Caco-2 (cell line): ENCODE measurements at regions of chr2 and their contacts with region 1.

Region 1: DNA sequence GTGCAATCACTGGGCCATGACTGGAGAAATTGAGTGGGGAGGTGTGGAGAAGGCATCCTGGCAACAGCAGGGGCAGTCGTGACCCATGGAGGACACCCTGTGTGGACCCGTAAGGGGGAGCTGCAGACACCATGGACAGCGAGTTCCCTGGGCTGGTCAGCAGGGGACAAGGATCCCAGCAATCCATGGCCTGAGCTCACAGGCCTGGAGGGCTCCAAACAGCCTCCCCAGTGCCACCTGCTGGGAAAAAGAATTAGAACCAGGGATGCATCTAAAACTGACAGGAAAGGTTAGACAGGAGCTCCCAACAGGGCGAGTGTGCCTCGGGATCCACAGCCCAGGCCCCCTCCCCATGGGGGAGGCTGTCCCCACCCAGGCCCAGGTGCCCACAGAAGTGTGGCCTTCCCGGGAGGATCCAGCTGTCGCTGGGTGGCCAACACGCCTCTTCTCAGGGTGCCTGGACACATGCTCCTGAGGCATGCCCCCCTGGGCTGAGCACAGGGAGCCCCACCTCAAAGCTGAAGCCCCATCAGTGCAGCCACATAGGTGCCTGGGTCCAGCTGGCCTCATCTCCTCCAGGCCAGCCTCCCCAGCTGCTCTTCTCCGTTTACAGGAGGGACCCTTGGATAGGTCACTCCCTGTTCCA is 20.5 kb upstream of the KIF1A start:
- DNase-seq: peak; percentile 78 to 81
- H3K4me3 ChIP-seq: no peak overlapping the region
- H3K4me3 Mint-ChIP-seq: no peak overlapping the region
- H3K27ac Mint-ChIP-seq: no peak overlapping the region
- H3K4me1 ChIP-seq: no peaks in the 10 kb centered on the region
- H3K4me1 Mint-ChIP-seq: no peaks in the 10 kb centered on the region
- H3K27me3 ChIP-seq: no peaks in the 10 kb centered on the region
- H3K27me3 Mint-ChIP-seq: peaks cover 15% of the 10 kb centered on the region
- CTCF ChIP-seq: peak; percentile 66 to 69

Region 2: DNA sequence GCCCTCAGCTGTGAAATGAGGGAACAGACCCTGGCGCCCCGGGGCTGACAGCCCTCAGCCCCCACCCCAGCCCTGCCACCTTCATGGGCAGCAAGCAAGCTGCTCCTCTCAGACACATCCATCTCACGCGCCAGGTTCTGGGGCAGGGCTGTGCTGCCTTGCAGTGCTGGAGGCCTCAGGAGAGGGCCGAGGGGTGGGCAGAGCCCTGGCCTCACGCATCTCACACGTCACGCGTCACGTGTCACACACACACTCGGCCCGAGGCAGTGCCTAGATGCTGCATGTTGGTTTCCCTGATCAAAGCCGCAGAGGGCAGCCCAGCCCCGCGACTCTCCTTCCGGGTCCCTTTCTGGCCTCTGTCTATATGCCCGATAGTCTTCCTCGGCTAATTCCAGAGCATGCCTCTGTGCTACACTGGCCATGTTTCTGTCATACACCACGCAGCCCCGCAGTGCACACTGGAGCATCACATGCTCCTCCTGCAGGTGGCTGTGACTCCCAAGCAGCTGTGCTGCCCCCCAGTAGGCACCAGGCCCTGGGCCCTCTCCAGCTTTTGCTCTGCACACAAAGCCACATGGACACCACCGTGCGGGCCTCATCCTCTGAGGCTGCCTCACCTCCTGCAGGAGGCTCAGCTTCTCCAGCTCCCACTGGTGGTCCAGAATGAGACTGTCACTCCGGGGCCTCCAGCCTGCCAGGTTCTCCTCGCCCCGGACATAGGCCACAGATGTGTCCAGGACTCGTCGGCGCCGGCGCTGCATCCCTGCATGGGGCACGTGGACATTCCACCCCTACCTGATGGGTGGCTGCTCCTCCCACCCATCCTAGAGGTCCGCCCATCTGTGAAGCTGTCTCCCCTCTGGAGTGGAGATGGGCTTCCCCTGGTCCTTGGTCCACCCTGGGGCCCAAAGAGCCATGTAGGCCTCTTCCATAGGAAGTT is 117.5 kb before region 1 on chr2:
- CTCF ChIA-PET with region 1: no interaction called
- POLR2A ChIA-PET with region 1: no interaction called
- intact Hi-C with region 1: loop called (anchors 1 kb)
- DNase-seq: no peak
- H3K4me3 ChIP-seq: no peak overlapping the region
- H3K4me3 Mint-ChIP-seq: no peak overlapping the region
- H3K27ac Mint-ChIP-seq: no peak overlapping the region
- H3K4me1 ChIP-seq: no peaks in the 10 kb centered on the region
- H3K4me1 Mint-ChIP-seq: no peaks in the 10 kb centered on the region
- H3K27me3 ChIP-seq: no peaks in the 10 kb centered on the region
- H3K27me3 Mint-ChIP-seq: no peaks in the 10 kb centered on the region
- CTCF ChIP-seq: no peak

Region 3: GRCh38 chr2:240810207-240810606 is 30.4 kb before region 1 on chr2:
- CTCF ChIA-PET with region 1: interaction called, 28 read pairs
- POLR2A ChIA-PET with region 1: no interaction called
- intact Hi-C with region 1: loop called (anchors 1 kb)
- DNase-seq: no peak
- H3K4me3 ChIP-seq: no peak overlapping the region
- H3K4me3 Mint-ChIP-seq: no peak overlapping the region
- H3K27ac Mint-ChIP-seq: no peak overlapping the region
- H3K4me1 ChIP-seq: no peaks in the 10 kb centered on the region
- H3K4me1 Mint-ChIP-seq: no peaks in the 10 kb centered on the region
- H3K27me3 ChIP-seq: no peaks in the 10 kb centered on the region
- H3K27me3 Mint-ChIP-seq: no peaks in the 10 kb centered on the region
- CTCF ChIP-seq: no peak

Region 4: DNA sequence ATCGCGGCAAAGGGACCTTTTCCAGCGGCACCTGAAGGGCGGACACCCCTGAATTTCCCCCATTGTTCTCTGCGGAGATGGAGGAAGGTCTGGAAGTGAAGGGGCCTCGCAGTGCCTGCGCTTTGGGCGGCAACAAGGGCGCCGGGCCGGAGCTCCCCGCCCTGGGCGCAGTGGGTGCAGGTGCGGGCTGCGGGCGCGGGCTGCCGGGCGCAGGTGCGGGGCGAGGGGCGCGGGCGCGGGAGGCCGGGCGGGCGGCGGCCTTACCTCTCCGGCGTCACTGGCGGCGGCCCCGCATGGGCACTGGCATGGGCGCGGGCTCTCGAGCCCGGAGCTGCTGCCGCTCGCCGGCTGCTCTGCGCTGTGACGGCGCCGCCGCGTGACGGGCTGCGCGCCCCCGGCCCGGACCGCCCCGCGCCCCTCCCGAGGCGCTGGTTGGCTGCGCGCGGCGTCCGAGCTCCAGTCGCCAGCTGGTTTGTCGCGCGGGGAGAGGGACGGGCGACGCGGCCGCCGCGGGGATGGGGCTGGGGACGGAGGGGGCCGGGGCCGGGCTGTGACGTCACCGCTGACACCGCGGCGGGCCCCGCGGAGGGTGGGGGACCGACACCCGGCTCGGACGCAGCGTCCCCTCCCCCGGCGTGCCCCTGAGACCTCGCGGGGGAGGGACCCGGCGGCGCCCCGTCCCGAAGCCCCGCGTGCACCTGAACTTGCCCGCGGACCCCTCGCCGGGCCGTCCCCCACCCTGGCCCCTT is 20.5 kb before region 1 on chr2 and contains the start of gene KIF1A:
- CTCF ChIA-PET with region 1: interaction called, 11 read pairs
- POLR2A ChIA-PET with region 1: no interaction called
- intact Hi-C with region 1: no loop called
- DNase-seq: peak in 1 of 2 experiments; percentile 79
- H3K4me3 ChIP-seq: peak within 1 kb of the TSS; percentile 27
- H3K4me3 Mint-ChIP-seq: peak within 1 kb of the TSS; percentile 70
- H3K27ac Mint-ChIP-seq: no peak within 1 kb of the TSS
- H3K4me1 ChIP-seq: no peaks in the 10 kb centered on the region
- H3K4me1 Mint-ChIP-seq: no peaks in the 10 kb centered on the region
- H3K27me3 ChIP-seq: no peaks in the 10 kb centered on the region
- H3K27me3 Mint-ChIP-seq: peaks cover 21% of the 10 kb centered on the region
- CTCF ChIP-seq: no peak
- total RNA-seq, gene KIF1A: 29.8 and 33.1 TPM in 2 replicates